CD4-positive, alpha-beta memory T cell (primary cell): ENCODE measurements at regions of chr9 and their contacts with region 1.

Region 1: DNA sequence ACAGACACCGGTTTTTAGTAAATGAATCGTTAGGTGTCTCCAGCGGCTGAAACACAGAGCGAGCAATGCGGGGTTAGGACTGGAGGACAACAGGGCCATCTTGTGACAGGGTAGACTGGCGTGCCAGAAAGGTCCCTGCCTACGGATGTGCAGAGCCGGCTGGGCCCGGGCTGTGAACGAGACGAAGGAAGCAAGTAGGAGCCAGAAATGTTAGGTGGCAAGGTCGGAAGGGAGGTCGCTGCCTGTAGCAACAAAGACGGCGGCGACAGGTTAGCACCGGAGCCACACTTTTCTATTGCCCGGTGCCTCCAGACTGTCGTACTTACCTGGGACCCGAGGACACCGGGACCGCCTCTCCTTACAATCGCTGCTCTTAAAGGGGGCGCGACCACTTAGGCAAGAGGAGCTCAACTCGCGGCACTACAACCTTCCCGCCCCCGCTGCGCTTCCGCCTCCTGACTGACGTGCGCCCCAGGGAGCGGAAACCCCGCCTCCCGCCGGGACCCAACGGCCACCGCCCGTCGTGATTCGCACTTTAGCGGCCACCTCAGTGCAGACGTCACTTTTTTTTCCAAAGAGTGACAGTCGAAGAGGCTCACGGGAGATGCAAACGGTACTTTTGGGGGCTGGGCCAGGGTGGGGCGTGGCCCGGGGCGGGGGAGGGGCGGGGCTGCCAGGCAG is at the start of gene INIP:
- DNase-seq: peak; percentile 97 to 98 (median 98)
- H3K4me3 ChIP-seq: peak within 1 kb of the TSS; percentile 78 to 95
- H3K4me3 Mint-ChIP-seq: peak within 1 kb of the TSS; percentile 93 to 99 (median 98)
- H3K27ac ChIP-seq: peak within 1 kb of the TSS; percentile 88
- H3K27ac Mint-ChIP-seq: peak within 1 kb of the TSS; percentile 94 to 99 (median 99)
- H3K4me1 ChIP-seq: peaks cover 25% of the 10 kb centered on the region
- H3K4me1 Mint-ChIP-seq: peaks cover 15 to 37% (median 26%) of the 10 kb centered on the region in 4 donors
- H3K27me3 ChIP-seq: no peaks in the 10 kb centered on the region
- H3K27me3 Mint-ChIP-seq: no peaks in the 10 kb centered on the region
- total RNA-seq, gene INIP: 25.2 to 33.4 TPM

Region 2: DNA sequence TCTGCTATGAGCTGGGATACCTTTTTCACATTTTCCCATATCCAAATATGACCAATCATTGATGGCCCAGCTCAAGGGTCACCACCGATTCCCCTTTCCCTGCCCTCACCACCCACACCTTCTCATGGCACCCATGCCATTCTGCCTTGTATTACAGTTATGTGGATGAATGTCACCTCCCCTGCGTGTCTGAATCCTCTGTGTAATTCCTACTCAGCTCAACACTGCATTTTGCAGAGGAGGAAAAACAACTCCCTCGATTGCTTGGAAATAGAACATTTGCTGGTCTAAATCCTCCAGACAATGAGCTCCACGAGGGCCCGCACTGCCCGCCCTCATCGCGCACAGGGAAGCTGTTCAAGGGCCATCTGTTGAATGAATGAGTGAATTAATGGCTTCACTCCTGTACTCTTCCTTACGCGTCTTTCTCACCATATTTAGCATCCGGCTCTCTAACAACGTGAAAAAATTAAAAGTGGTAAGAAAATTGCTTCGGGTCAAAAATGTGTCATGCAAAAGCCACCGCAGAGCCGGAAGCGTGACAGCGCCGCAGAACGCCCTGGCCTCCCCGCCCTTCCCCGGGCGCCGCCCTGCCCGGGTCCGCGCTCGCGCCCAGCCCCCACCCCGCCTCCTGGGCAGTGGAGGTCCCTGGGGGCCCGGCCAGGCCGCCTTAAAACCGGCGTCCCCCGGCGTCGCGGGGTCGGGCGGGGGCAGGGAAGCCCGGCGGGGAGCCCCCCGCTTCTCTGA is 543.4 kb before region 1 on chr9:
- CTCF ChIA-PET with region 1: no interaction called
- POLR2A ChIA-PET with region 1: no interaction called
- intact Hi-C with region 1: loop called (anchors 10 kb)
- DNase-seq: peak; percentile 75 to 83 (median 80)
- H3K4me3 ChIP-seq: peak overlapping the region; percentile 54 to 68
- H3K4me3 Mint-ChIP-seq: peak overlapping the region; percentile 88 to 96 (median 91)
- H3K27ac ChIP-seq: peak overlapping the region; percentile 19
- H3K27ac Mint-ChIP-seq: peak overlapping the region; percentile 82 to 97 (median 95)
- H3K4me1 ChIP-seq: peaks cover 64% of the 10 kb centered on the region
- H3K4me1 Mint-ChIP-seq: peaks cover 49 to 88% (median 69%) of the 10 kb centered on the region in 4 donors
- H3K27me3 ChIP-seq: no peaks in the 10 kb centered on the region
- H3K27me3 Mint-ChIP-seq: no peaks in the 10 kb centered on the region

Region 3: GRCh38 chr9:112443200-112443599 is 274.6 kb before region 1 on chr9:
- CTCF ChIA-PET with region 1: interaction called, 4 read pairs
- POLR2A ChIA-PET with region 1: interaction called, 4 read pairs
- intact Hi-C with region 1: loop called (anchors 1 kb)
- DNase-seq: peak in 4 of 5 donors; percentile 14 to 28 (median 24)
- H3K4me3 ChIP-seq: no peak overlapping the region
- H3K4me3 Mint-ChIP-seq: no peak overlapping the region
- H3K27ac ChIP-seq: no peak overlapping the region
- H3K27ac Mint-ChIP-seq: no peak overlapping the region
- H3K4me1 ChIP-seq: no peaks in the 10 kb centered on the region
- H3K4me1 Mint-ChIP-seq: peaks cover 0 to 2% (median 0%) of the 10 kb centered on the region in 4 donors
- H3K27me3 ChIP-seq: no peaks in the 10 kb centered on the region
- H3K27me3 Mint-ChIP-seq: no peaks in the 10 kb centered on the region

Region 4: DNA sequence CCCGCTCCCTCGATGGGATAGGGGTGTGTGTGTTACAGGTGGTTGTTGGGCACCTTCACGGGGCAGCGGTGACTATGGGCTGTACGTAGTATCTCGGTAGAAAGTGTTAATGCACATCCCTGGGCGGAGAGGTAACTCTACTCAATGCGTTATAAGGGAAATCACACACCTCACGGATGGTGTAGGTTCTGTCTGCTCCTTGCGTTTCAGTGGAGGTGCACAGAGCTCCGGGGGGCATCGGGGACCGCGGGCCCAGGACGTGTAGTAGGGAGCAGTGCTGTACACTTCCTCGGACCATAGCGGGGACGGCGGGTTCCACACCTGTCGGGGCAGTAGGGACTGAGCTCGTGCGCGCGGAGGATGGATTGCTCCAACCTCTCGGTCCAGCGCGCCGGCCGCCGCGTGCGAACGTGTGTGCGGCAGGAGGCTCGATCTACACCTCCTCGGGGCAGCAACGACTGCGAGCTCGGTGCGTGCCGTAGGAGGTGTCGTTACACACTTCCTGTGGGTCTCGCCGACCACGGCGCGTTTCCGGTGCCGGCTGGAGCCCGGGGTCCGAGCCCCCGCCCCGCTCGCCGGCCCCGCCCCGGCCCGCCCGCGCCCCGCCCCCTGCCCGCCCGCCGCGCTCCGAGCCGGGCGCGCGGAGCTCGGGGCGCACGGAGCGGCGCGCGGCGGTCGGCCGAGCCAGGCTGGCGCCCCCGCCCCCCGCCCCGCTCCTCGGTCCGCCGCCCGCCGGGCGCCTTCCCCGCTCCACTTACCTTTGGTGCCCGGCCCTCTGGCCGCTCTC is 231.4 kb before region 1 on chr9 and contains the start of gene KIAA1958:
- CTCF ChIA-PET with region 1: interaction called, 5 read pairs
- POLR2A ChIA-PET with region 1: interaction called, 10 read pairs
- intact Hi-C with region 1: loop called (anchors 1 kb)
- DNase-seq: peak; percentile 65 to 76 (median 72)
- H3K4me3 ChIP-seq: peak within 1 kb of the TSS; percentile 77 to 78
- H3K4me3 Mint-ChIP-seq: peak within 1 kb of the TSS; percentile 93 to 99 (median 96)
- H3K27ac ChIP-seq: peak within 1 kb of the TSS; percentile 42
- H3K27ac Mint-ChIP-seq: peak within 1 kb of the TSS; percentile 79 to 95 (median 92)
- H3K4me1 ChIP-seq: peaks cover 8% of the 10 kb centered on the region
- H3K4me1 Mint-ChIP-seq: peaks cover 9 to 28% (median 16%) of the 10 kb centered on the region in 4 donors
- H3K27me3 ChIP-seq: no peaks in the 10 kb centered on the region
- H3K27me3 Mint-ChIP-seq: no peaks in the 10 kb centered on the region
- total RNA-seq, gene KIAA1958: 4.3 to 5.1 TPM

Region 5: DNA sequence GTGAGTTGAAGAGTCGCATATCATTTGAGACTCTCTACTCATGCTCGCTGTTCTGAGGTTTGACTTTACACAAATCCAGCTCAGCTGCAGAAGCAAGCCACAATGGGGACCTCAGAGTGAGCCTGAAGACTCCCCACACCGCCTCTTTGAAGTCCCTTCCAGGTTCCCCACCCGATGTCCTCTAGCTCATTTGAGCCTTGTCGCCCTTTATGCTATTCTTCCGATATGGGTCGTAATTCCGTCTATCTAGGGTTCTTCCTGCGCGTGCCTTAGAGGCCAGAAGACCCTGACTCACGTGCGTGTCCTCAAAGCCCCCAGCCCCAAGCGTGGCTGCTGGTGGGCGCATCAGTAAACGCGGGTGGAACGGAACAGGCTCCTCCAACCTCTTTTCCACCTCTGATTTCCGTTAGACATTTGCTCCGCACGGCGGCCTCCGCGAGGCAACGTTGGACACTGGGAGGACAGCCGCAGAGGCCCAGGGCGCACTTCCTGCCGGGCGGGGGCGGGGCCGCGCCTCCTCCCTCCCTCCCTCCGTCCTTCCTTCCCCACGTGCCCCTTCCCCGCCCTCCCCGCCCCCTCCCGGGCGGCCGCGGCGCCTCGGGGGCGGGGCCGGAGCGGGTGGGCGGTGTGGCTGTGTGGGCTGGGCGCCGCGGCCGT is 32.4 kb after region 1 on chr9 and contains the start of gene SNX30:
- CTCF ChIA-PET with region 1: interaction called, 7 read pairs
- POLR2A ChIA-PET with region 1: interaction called, 63 read pairs
- intact Hi-C with region 1: loop called (anchors 1 kb)
- DNase-seq: peak; percentile 76 to 84 (median 80)
- H3K4me3 ChIP-seq: peak within 1 kb of the TSS; percentile 57 to 77
- H3K4me3 Mint-ChIP-seq: peak within 1 kb of the TSS; percentile 85 to 93 (median 90)
- H3K27ac ChIP-seq: peak within 1 kb of the TSS; percentile 67
- H3K27ac Mint-ChIP-seq: peak within 1 kb of the TSS; percentile 87 to 97 (median 96)
- H3K4me1 ChIP-seq: peaks cover 62% of the 10 kb centered on the region
- H3K4me1 Mint-ChIP-seq: peaks cover 44 to 70% (median 56%) of the 10 kb centered on the region in 4 donors
- H3K27me3 ChIP-seq: no peaks in the 10 kb centered on the region
- H3K27me3 Mint-ChIP-seq: no peaks in the 10 kb centered on the region
- total RNA-seq, gene SNX30: 10.8 to 10.9 TPM